H1 (cell line): ENCODE measurements at regions of chr4 and their contacts with region 1.

Region 1: GRCh38 chr4:122777846-122778655 is 45.5 kb downstream of the BBS12 start:
- DNase-seq: no peak
- H3K4me3 ChIP-seq: no peak overlapping the region
- H3K27ac ChIP-seq: no peak overlapping the region
- H3K4me1 ChIP-seq: peaks cover 0 to 16% (median 12%) of the 10 kb centered on the region in 4 experiments; a peak in 5 of 7 replicates
- H3K27me3 ChIP-seq: no peaks in the 10 kb centered on the region
- CTCF ChIP-seq: no peak
- EP300 ChIP-seq: no peak
- POLR2A ChIP-seq: no peak
- RAD21 ChIP-seq: no peak

Region 2: DNA sequence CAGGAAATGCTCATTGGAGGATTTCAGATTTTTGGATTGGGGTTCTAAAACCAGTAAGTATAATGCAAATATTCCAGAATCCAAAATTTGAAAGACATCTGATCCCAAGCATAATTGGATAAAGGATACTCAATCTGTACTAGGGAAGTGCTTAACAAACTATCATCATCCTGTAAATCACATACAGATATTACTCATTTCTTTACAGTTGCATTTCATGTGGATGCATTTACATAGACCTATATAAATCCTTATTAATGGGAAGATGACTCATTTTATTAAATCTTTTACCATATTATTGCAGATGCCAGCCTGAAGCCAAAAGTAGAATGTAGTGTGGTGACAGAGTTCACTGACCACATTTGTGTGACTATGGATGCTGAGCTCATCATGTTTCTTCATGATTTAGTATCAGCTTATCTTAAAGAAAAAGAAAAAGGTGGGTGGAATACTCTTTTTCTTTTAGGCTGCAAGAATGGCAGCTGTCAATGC is 421.7 kb before region 1 on chr4:
- CTCF ChIA-PET with region 1: no interaction called
- POLR2A ChIA-PET with region 1: no interaction called
- DNase-seq: no peak
- H3K4me3 ChIP-seq: no peak overlapping the region
- H3K27ac ChIP-seq: no peak overlapping the region
- H3K4me1 ChIP-seq: no peaks in the 10 kb centered on the region
- H3K27me3 ChIP-seq: no peaks in the 10 kb centered on the region
- CTCF ChIP-seq: no peak
- EP300 ChIP-seq: no peak
- POLR2A ChIP-seq: no peak
- RAD21 ChIP-seq: no peak

Region 3: GRCh38 chr4:122798101-122798500 is 20.1 kb after region 1 on chr4:
- CTCF ChIA-PET with region 1: interaction called, 12 read pairs
- POLR2A ChIA-PET with region 1: interaction called, 79 read pairs
- DNase-seq: no peak
- H3K4me3 ChIP-seq: peak overlapping the region in 1 of 4 experiments; percentile 2; a peak in 1 of 8 replicates
- H3K27ac ChIP-seq: peak overlapping the region; percentile 91
- H3K4me1 ChIP-seq: peaks cover 3 to 17% (median 14%) of the 10 kb centered on the region in 4 experiments; a peak in 6 of 7 replicates
- H3K27me3 ChIP-seq: no peaks in the 10 kb centered on the region
- CTCF ChIP-seq: no peak
- EP300 ChIP-seq: no peak
- POLR2A ChIP-seq: no peak; a peak in 1 of 3 replicates
- RAD21 ChIP-seq: peak in 1 of 2 experiments; percentile 24; a peak in 1 of 4 replicates